ENCODE measurements at regions of chr14 and their contacts with region 1.

Region 1: DNA sequence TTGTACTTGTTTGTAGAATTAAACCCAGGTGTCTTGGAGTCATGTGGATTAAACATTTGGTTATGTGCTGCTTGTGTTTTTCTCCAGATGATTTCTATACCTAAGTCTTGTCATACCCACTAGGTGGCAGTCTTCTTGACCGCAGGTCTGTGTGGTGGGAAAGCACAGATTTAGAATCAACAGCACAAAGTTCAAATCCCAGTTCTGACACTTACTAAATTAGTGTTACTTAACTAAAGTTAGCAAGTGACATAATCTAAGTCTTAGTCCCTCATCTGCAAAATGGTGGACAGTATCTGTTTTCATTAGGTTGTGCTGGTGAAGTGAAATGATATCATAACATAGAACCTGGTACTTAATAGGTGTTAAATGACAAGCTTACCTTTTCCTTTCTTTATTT is 151.0 kb upstream of the ARHGAP5 start:
- DNase-seq: peak; percentile 60
- H3K4me3 ChIP-seq: no peak overlapping the region
- H3K27ac ChIP-seq: peak overlapping the region; percentile 95
- H3K4me1 ChIP-seq: peaks cover 21% of the 10 kb centered on the region
- H3K27me3 ChIP-seq: no peaks in the 10 kb centered on the region
- CTCF ChIP-seq: peak; percentile 46 to 53
- POLR2A ChIP-seq: no peak

Region 2: DNA sequence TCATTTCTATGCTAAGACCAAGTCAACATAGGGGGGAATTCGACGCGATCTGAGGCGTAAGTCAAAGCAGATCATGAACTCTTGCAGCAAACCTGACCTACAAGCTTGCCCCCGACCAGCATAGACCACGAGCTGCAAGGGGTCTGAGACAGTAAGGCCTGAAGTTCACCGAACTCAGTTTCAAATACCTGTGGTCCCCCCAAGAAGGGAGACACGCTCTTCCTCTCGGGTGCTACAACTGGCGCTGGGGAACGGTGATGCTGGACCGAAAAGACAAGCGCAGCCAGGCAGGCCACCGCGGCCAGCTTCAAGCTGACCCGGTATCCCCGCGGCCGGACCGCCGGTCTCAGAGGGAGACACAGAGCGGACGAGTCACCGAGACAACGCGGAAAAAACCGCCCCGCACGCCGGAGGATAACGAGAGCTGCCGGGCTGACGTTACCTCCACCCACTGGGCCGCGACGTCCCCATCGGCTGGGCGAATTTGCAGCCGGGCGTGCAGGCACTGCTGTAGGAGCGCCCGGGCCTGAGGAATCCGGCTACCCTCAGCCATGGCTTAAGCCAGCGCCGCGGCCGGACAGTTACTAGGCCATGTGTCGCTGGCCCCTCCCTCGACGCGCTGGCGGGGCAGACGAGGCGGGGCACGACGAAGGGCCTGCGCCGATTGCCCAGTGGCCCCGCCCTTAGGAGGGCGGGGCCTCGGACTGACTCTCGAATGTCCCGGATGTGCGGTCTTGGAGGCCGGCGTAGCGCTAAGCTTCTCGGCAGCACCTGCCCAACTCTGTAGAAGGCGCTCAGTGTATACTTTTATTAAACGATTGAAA is 469.1 kb before region 1 on chr14 and contains the start of gene DTD2:
- CTCF ChIA-PET with region 1: no interaction called
- POLR2A ChIA-PET with region 1: no interaction called
- dilution Hi-C with region 1: no loop called
- intact Hi-C with region 1: loop called (anchors 1 kb)
- DNase-seq: peak; percentile 95
- H3K4me3 ChIP-seq: peak within 1 kb of the TSS; percentile 34 to 64 (median 63)
- H3K27ac ChIP-seq: peak within 1 kb of the TSS; percentile 70
- H3K4me1 ChIP-seq: peaks cover 2% of the 10 kb centered on the region
- H3K27me3 ChIP-seq: no peaks in the 10 kb centered on the region
- CTCF ChIP-seq: no peak
- POLR2A ChIP-seq: peak; percentile 88
- total RNA-seq, gene DTD2: 10.8 and 14.4 TPM in 2 replicates

Region 3: GRCh38 chr14:31561155-31561846 is 364.8 kb before region 1 on chr14 and contains the start of gene NUBPL:
- CTCF ChIA-PET with region 1: no interaction called
- POLR2A ChIA-PET with region 1: no interaction called
- dilution Hi-C with region 1: no loop called
- intact Hi-C with region 1: loop called (anchors 5 kb)
- DNase-seq: peak; percentile 95
- H3K4me3 ChIP-seq: peak within 1 kb of the TSS; percentile 32 to 80 (median 73)
- H3K27ac ChIP-seq: peak within 1 kb of the TSS; percentile 51
- H3K4me1 ChIP-seq: peaks cover 4% of the 10 kb centered on the region
- H3K27me3 ChIP-seq: peaks cover 0 to 4% of the 10 kb centered on the region in 2 experiments
- CTCF ChIP-seq: no peak
- POLR2A ChIP-seq: peak; percentile 78
- total RNA-seq, gene NUBPL: 8.2 and 12.3 TPM in 2 replicates

Region 4: DNA sequence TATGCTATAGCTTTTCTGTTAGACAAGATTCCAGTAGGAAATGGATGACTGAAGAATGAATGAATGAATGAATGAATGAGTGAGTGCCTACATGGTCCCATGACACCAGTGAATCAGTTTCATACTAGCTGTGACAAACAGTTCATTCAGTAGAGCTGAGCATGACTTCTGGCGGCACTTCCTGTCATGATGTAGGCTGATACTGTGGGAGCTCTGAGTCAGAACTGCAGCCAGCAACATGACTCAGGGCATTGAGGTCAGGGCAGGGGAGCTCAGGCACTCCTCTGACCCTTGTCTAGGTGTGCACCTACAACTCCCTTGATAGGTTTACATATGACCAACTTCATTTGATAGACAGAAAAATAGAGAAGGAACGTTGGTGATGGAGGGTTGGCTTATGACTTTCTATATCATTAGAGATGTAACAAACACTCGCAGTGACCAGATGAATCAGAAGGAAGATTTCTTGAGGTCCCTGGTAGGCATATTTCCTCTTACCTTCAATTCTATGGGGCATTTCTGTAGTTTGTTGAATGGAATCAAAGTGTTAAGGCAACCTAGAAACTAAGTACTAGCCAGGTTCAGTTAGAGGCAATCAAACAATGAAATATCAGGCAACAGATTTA is 11.7 kb after region 1 on chr14:
- CTCF ChIA-PET with region 1: interaction called, 9 read pairs
- POLR2A ChIA-PET with region 1: no interaction called
- dilution Hi-C with region 1: no loop called
- intact Hi-C with region 1: loop called (anchors 1 kb)
- DNase-seq: peak; percentile 68
- H3K4me3 ChIP-seq: no peak overlapping the region
- H3K27ac ChIP-seq: peak overlapping the region; percentile 24
- H3K4me1 ChIP-seq: peaks cover 21% of the 10 kb centered on the region
- H3K27me3 ChIP-seq: peaks cover 8 to 11% of the 10 kb centered on the region in 2 experiments
- CTCF ChIP-seq: no peak
- POLR2A ChIP-seq: no peak

Region 5: GRCh38 chr14:31968107-31968810 is 42.1 kb after region 1 on chr14:
- CTCF ChIA-PET with region 1: no interaction called
- POLR2A ChIA-PET with region 1: no interaction called
- dilution Hi-C with region 1: no loop called
- intact Hi-C with region 1: no loop called
- DNase-seq: no peak
- H3K4me3 ChIP-seq: no peak overlapping the region
- H3K27ac ChIP-seq: no peak overlapping the region
- H3K4me1 ChIP-seq: no peaks in the 10 kb centered on the region
- H3K27me3 ChIP-seq: no peaks in the 10 kb centered on the region
- CTCF ChIP-seq: no peak
- POLR2A ChIP-seq: no peak

Region 6: DNA sequence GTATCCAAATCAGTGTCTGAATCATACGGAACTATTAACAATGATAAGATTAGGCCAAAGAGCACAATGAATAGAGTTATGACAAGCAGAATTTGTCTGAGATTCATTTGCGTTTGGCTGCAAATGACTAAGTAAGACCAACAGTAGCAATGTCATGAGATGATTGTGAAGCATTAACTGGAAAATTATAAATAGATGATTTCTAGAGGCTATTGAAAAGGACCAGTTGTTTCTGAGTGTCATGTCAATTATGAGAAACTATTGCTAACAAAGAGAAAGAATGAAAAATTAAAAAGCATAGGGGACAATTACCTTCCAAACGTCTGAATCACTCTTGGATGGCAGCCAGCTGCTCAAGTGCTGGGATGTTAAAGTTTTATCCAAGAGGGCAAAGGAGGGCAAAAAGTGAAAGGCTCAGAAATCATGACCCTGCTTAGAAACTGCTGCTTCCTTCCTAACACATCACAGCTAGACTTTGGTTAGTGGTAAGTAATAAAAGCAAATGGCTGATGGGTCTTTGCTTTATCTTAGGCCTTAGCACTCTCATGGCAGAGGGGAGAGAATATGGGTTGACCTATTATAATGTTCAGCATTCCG is 491.9 kb after region 1 on chr14:
- CTCF ChIA-PET with region 1: no interaction called
- POLR2A ChIA-PET with region 1: no interaction called
- dilution Hi-C with region 1: no loop called
- intact Hi-C with region 1: loop called (anchors 2 kb)
- DNase-seq: peak; percentile 89
- H3K4me3 ChIP-seq: no peak overlapping the region
- H3K27ac ChIP-seq: peak overlapping the region; percentile 54
- H3K4me1 ChIP-seq: peaks cover 36% of the 10 kb centered on the region
- H3K27me3 ChIP-seq: no peaks in the 10 kb centered on the region
- CTCF ChIP-seq: no peak
- POLR2A ChIP-seq: no peak

Region 7: DNA sequence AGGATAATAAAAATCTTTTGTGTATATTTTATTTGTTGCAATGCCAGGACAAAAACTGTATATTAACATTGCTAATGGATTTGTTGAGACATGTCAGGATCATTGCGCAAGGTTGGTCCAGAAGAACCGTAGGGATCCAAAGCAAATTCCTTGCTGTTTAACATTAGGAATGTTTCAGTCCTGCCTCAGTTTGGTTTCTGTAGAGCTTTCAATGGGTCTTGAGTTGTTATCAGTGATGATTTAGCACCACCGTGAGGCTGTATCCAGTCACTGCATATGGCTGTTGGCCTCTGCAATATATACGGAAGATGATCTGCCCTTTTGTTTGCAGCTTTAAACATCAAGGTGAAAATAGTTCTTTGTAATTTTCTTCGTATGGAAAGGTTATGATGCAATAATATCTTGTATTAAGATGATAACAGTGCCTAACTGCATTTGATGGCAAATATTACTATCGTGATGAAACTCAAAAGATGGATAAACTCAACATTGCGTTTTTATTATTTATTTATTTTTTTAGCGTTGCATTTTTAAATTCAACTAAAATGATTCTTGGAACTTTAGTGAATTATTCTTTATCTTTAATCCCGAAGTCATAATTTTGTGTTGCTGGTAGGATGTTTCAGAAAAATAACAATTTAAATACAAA is 634.2 kb after region 1 on chr14:
- CTCF ChIA-PET with region 1: interaction called, 11 read pairs
- POLR2A ChIA-PET with region 1: no interaction called
- dilution Hi-C with region 1: no loop called
- intact Hi-C with region 1: loop called (anchors 2 kb)
- DNase-seq: peak; percentile 76
- H3K4me3 ChIP-seq: no peak overlapping the region
- H3K27ac ChIP-seq: no peak overlapping the region
- H3K4me1 ChIP-seq: peaks cover 2% of the 10 kb centered on the region
- H3K27me3 ChIP-seq: no peaks in the 10 kb centered on the region
- CTCF ChIP-seq: peak; percentile 76 to 83
- POLR2A ChIP-seq: no peak

Measured in endothelial cell of umbilical vein (primary cell).